SK-N-SH (cell line): ENCODE measurements at regions of chr14 and their contacts with region 1.

Region 1: GRCh38 chr14:32252030-32252670 is 49.1 kb upstream of the RNU6-8 start:
- DNase-seq: peak; percentile 76
- H3K4me3 ChIP-seq: no peak overlapping the region; a peak in 1 of 4 replicates
- H3K27ac ChIP-seq: 0 out of 4 replicates have a peak overlapping the region, but pooled peaks of 1 of the 2 experiments have one; percentile 16
- H3K4me1 ChIP-seq: peaks cover 0 to 7% of the 10 kb centered on the region in 2 experiments; a peak in 2 of 4 replicates
- H3K27me3 ChIP-seq: no peaks in the 10 kb centered on the region
- CTCF ChIP-seq: peak; percentile 92
- EP300 ChIP-seq: no peak
- RAD21 ChIP-seq: peak; percentile 97

Region 2: GRCh38 chr14:31926123-31926522 is 326.0 kb before region 1 on chr14:
- CTCF ChIA-PET with region 1: interaction called, 72 read pairs
- POLR2A ChIA-PET with region 1: interaction called, 5 read pairs
- DNase-seq: peak; percentile 44
- H3K4me3 ChIP-seq: no peak overlapping the region; a peak in 1 of 4 replicates
- H3K27ac ChIP-seq: peak overlapping the region in 1 of 2 experiments; percentile 89; a peak in 2 of 4 replicates
- H3K4me1 ChIP-seq: peaks cover 0 to 15% of the 10 kb centered on the region in 2 experiments; a peak in 1 of 4 replicates
- H3K27me3 ChIP-seq: no peaks in the 10 kb centered on the region
- CTCF ChIP-seq: peak; percentile 68
- EP300 ChIP-seq: no peak
- RAD21 ChIP-seq: peak; percentile 66

Region 3: DNA sequence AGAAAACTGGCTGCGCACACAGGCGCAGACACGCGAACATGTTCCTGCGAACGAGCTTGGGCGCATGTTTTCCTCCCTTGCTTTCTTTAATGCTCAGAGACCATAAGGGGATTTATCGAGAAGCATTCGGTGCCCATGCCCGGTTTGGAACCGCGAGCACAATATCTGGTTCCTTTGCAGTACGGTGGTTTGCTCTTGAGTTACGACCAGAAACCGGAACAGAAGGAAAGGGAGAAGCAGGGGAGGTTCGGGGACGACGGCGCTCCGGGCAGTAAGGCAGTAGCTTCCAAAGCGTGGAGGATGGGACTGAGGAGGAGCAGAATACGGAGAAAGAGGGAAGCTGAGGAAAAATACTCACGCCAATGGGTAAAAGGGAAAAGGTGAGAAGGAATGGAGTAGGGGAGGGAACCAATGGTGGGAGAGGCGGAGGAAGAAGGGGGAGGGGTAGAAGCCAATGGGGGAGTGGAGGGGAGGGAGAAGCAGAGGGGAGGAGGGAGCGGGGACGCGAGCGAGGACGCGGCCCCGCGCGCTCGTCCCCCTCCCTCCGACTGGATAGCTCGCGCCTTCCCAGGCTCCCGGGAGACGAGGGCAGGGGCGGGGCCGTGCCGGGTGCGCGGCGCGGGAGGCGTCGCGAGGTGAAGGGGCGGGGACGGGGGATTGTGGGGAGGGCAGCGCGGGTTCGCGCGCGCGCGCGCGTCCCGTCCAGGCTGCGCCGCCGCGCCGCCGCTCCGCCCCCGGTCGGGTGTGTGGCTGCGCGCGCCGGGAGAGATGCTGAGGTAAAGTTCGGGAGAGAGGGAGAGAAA is 175.7 kb before region 1 on chr14:
- CTCF ChIA-PET with region 1: interaction called, 169 read pairs
- POLR2A ChIA-PET with region 1: no interaction called
- DNase-seq: peak; percentile 94
- H3K4me3 ChIP-seq: peak overlapping the region; percentile 85 to 96
- H3K27ac ChIP-seq: peak overlapping the region; percentile 97 to 98
- H3K4me1 ChIP-seq: peaks cover 2 to 4% of the 10 kb centered on the region in 2 experiments; a peak in 1 of 4 replicates
- H3K27me3 ChIP-seq: no peaks in the 10 kb centered on the region
- CTCF ChIP-seq: no peak
- EP300 ChIP-seq: no peak
- RAD21 ChIP-seq: no peak

Region 4: GRCh38 chr14:32382704-32383103 is 130.6 kb after region 1 on chr14:
- CTCF ChIA-PET with region 1: interaction called, 58 read pairs
- POLR2A ChIA-PET with region 1: no interaction called
- DNase-seq: peak; percentile 34
- H3K4me3 ChIP-seq: no peak overlapping the region
- H3K27ac ChIP-seq: no peak overlapping the region
- H3K4me1 ChIP-seq: peaks cover 0 to 1% of the 10 kb centered on the region in 2 experiments; a peak in 1 of 4 replicates
- H3K27me3 ChIP-seq: no peaks in the 10 kb centered on the region
- CTCF ChIP-seq: peak; percentile 72
- EP300 ChIP-seq: no peak
- RAD21 ChIP-seq: peak; percentile 88

Region 5: DNA sequence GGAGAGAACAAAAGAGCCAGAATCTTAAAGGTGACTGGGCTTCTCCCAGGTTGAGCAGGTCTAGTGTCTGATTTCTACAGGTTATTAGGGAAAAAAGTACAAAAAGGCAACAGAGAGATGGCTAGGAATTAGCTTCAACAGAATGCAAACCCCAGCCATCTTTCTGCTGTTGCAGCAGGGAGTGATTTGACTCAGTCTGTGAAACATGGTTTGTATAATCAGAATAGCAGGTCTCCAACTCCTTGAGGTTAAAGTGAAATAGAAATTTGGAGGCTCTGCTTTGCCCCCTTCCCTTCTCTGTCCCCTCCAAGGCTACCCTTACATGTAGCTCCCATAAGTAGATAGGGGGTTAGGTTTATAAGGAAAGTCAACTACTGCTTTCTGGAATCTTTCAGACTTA is 182.7 kb after region 1 on chr14:
- CTCF ChIA-PET with region 1: no interaction called
- POLR2A ChIA-PET with region 1: no interaction called
- DNase-seq: no peak
- H3K4me3 ChIP-seq: no peak overlapping the region
- H3K27ac ChIP-seq: peak overlapping the region in 1 of 2 experiments; percentile 48; a peak in 2 of 4 replicates
- H3K4me1 ChIP-seq: peaks cover 4 to 22% of the 10 kb centered on the region in 2 experiments; a peak in 3 of 4 replicates
- H3K27me3 ChIP-seq: no peaks in the 10 kb centered on the region
- CTCF ChIP-seq: no peak
- EP300 ChIP-seq: no peak
- RAD21 ChIP-seq: no peak

Region 6: GRCh38 chr14:32560209-32560857 is 308.2 kb after region 1 on chr14:
- CTCF ChIA-PET with region 1: interaction called, 13 read pairs
- POLR2A ChIA-PET with region 1: no interaction called
- DNase-seq: peak; percentile 59
- H3K4me3 ChIP-seq: no peak overlapping the region; a peak in 1 of 4 replicates
- H3K27ac ChIP-seq: peak overlapping the region; percentile 83 to 89
- H3K4me1 ChIP-seq: peaks cover under 1 to 33% of the 10 kb centered on the region in 2 experiments; a peak in 2 of 4 replicates
- H3K27me3 ChIP-seq: no peaks in the 10 kb centered on the region
- CTCF ChIP-seq: peak; percentile 96
- EP300 ChIP-seq: no peak
- RAD21 ChIP-seq: peak; percentile 95

Region 7: GRCh38 chr14:33350366-33350990 is 1098.3 kb after region 1 on chr14:
- CTCF ChIA-PET with region 1: no interaction called
- POLR2A ChIA-PET with region 1: no interaction called
- DNase-seq: no peak
- H3K4me3 ChIP-seq: no peak overlapping the region
- H3K27ac ChIP-seq: no peak overlapping the region
- H3K4me1 ChIP-seq: no peaks in the 10 kb centered on the region; a peak in 1 of 4 replicates
- H3K27me3 ChIP-seq: no peaks in the 10 kb centered on the region
- CTCF ChIP-seq: no peak
- EP300 ChIP-seq: no peak
- RAD21 ChIP-seq: no peak